GM12878 (cell line): ENCODE measurements at regions of chr19 and their contacts with region 1.

Region 1: GRCh38 chr19:42468273-42468796 is 25.6 kb upstream of the CXCL17 start:
- DNase-seq: no peak
- ATAC-seq: no peak
- H3K4me3 ChIP-seq: no peak overlapping the region
- H3K27ac ChIP-seq: no peak overlapping the region
- H3K4me1 ChIP-seq: peaks cover 30% of the 10 kb centered on the region
- H3K27me3 ChIP-seq: no peaks in the 10 kb centered on the region
- CTCF ChIP-seq: no peak
- EP300 ChIP-seq: no peak
- POLR2A ChIP-seq: no peak
- RAD21 ChIP-seq: no peak

Region 2: GRCh38 chr19:42261763-42262162 is 206.6 kb before region 1 on chr19:
- CTCF ChIA-PET with region 1: no interaction called
- POLR2A ChIA-PET with region 1: no interaction called
- RAD21 ChIA-PET with region 1: no interaction called
- SMC1A ChIA-PET with region 1: no interaction called
- in situ Hi-C with region 1: no loop called
- intact Hi-C with region 1: no loop called
- DNase-seq: no peak
- ATAC-seq: peak; percentile 46
- H3K4me3 ChIP-seq: no peak overlapping the region
- H3K27ac ChIP-seq: no peak overlapping the region
- H3K4me1 ChIP-seq: no peaks in the 10 kb centered on the region
- H3K27me3 ChIP-seq: no peaks in the 10 kb centered on the region
- CTCF ChIP-seq: no peak
- EP300 ChIP-seq: no peak
- POLR2A ChIP-seq: no peak
- RAD21 ChIP-seq: no peak

Region 3: GRCh38 chr19:42433503-42434260 is 34.7 kb before region 1 on chr19:
- CTCF ChIA-PET with region 1: interaction called, 13 read pairs
- POLR2A ChIA-PET with region 1: interaction called, 4 read pairs
- RAD21 ChIA-PET with region 1: interaction called, 5 read pairs
- SMC1A ChIA-PET with region 1: interaction called, 4 read pairs
- in situ Hi-C with region 1: no loop called
- intact Hi-C with region 1: no loop called
- DNase-seq: no peak
- ATAC-seq: peak; percentile 97
- H3K4me3 ChIP-seq: no peak overlapping the region
- H3K27ac ChIP-seq: no peak overlapping the region
- H3K4me1 ChIP-seq: no peaks in the 10 kb centered on the region
- H3K27me3 ChIP-seq: no peaks in the 10 kb centered on the region
- CTCF ChIP-seq: peak; percentile 91 to 95 (median 93)
- EP300 ChIP-seq: no peak
- POLR2A ChIP-seq: no peak
- RAD21 ChIP-seq: peak; percentile 83

Region 4: DNA sequence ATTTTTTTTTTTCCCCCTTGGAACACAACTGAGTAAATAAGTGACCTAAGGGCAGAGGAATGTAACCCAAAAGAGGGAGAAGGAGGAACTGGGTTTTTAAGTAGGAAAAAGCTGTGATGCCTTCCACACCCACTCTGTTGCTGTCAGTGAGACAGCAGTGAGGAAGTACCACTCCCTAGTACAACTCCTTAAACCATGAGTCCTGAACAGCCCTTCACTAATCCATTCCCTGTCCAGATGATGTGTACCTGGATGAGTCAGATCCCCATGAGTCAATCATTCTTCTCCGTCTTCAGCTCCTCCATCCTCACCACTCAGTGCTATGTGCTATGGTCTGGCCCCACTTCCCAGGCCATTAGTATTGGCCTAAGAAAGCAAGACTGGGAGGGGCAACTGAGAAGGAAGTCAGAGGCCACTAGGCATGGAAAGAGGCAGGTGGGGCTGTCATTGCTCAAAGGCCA is 12.7 kb before region 1 on chr19:
- CTCF ChIA-PET with region 1: interaction called, 47 read pairs
- POLR2A ChIA-PET with region 1: interaction called, 6 read pairs
- RAD21 ChIA-PET with region 1: interaction called, 50 read pairs
- SMC1A ChIA-PET with region 1: interaction called, 37 read pairs
- in situ Hi-C with region 1: no loop called
- intact Hi-C with region 1: no loop called
- DNase-seq: no peak
- ATAC-seq: no peak
- H3K4me3 ChIP-seq: no peak overlapping the region
- H3K27ac ChIP-seq: no peak overlapping the region
- H3K4me1 ChIP-seq: no peaks in the 10 kb centered on the region
- H3K27me3 ChIP-seq: no peaks in the 10 kb centered on the region
- CTCF ChIP-seq: no peak
- EP300 ChIP-seq: no peak
- POLR2A ChIP-seq: no peak
- RAD21 ChIP-seq: no peak

Region 5: DNA sequence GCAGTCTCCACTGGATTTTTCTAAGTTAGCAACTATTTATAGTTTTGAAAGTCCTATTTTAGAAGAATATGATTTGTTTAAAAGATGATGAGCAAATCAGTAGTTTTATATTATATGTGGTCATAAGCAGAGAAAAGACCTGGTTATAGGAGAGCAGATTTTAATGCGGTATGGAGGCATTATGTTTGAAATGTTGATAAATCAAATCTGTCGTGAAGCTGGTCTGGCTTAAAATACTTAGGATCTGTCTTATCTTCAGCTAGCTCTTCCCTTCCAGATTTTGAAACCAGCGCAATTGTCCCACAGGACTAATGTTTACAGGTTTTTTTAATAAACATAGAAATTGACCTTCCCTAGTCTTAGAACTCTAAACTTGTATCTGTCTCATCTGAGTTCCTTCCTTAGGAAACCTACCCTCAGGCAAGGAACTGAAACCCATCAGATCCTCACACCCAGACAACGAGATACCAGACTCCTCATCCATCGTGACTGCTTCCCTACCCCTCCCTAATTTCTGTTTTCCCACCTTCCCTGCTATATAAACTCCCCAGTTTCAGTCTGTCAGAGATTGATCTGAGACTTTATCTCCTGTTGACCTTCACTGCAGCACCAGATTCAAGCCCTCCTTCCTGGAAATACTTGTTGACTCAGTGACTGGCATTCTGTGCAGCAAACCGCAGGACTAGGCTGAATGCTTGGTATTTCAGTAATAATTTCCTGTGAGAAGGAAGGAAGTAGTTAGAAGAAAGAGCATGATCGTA is 12.2 kb after region 1 on chr19:
- CTCF ChIA-PET with region 1: interaction called, 8 read pairs
- POLR2A ChIA-PET with region 1: interaction called, 11 read pairs
- RAD21 ChIA-PET with region 1: no interaction called
- SMC1A ChIA-PET with region 1: interaction called, 12 read pairs
- in situ Hi-C with region 1: no loop called
- intact Hi-C with region 1: no loop called
- DNase-seq: no peak
- ATAC-seq: no peak
- H3K4me3 ChIP-seq: no peak overlapping the region
- H3K27ac ChIP-seq: no peak overlapping the region
- H3K4me1 ChIP-seq: no peaks in the 10 kb centered on the region
- H3K27me3 ChIP-seq: no peaks in the 10 kb centered on the region
- CTCF ChIP-seq: no peak
- EP300 ChIP-seq: no peak
- POLR2A ChIP-seq: no peak
- RAD21 ChIP-seq: no peak

Region 6: GRCh38 chr19:42497492-42498168 is 29.3 kb after region 1 on chr19:
- CTCF ChIA-PET with region 1: interaction called, 20 read pairs
- POLR2A ChIA-PET with region 1: interaction called, 8 read pairs
- RAD21 ChIA-PET with region 1: interaction called, 28 read pairs
- SMC1A ChIA-PET with region 1: interaction called, 30 read pairs
- in situ Hi-C with region 1: no loop called
- intact Hi-C with region 1: no loop called
- DNase-seq: peak; percentile 60
- ATAC-seq: peak; percentile 86
- H3K4me3 ChIP-seq: peak overlapping the region; percentile 9; the same call in 1 of the 2 replicates
- H3K27ac ChIP-seq: peak overlapping the region; percentile 80
- H3K4me1 ChIP-seq: peaks cover 28% of the 10 kb centered on the region
- H3K27me3 ChIP-seq: no peaks in the 10 kb centered on the region
- CTCF ChIP-seq: no peak
- EP300 ChIP-seq: peak; percentile 66 to 78; a peak in 3 of 4 replicates
- POLR2A ChIP-seq: no peak
- RAD21 ChIP-seq: 0 out of 2 replicates have a peak, but pooled peaks have one; percentile 8

Region 7: DNA sequence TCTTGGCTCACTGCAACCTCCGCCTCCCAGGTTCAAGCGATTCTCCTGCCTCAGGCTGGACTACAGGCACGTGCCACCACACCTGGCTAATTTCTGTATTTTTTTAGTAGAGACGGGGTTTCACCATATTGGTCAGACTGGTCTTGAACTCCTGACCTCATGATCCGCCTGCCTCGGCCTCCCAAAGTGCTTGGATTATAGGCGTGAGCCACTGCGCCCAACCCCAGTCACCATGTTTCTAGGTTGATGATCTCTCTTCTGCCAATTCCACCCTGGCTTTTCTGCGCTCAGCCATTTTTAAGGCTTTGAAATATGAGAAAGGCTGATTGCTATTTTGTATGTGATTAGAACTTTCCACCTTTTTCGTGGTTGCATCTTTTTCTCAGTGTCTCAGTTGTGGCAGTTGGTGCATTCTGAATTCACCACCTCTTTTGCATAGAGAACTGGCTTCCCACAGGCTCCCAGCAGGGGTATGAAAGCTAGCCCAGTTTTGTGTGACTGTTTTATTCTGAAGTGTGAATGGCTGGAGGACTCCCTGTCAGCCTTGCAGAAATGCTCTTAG is 44.5 kb after region 1 on chr19:
- CTCF ChIA-PET with region 1: interaction called, 15 read pairs
- POLR2A ChIA-PET with region 1: interaction called, 10 read pairs
- RAD21 ChIA-PET with region 1: interaction called, 23 read pairs
- SMC1A ChIA-PET with region 1: interaction called, 19 read pairs
- in situ Hi-C with region 1: no loop called
- intact Hi-C with region 1: loop called (anchors 5 kb)
- DNase-seq: peak; percentile 71
- ATAC-seq: peak; percentile 96
- H3K4me3 ChIP-seq: no peak overlapping the region
- H3K27ac ChIP-seq: peak overlapping the region; percentile 71
- H3K4me1 ChIP-seq: peaks cover 52% of the 10 kb centered on the region
- H3K27me3 ChIP-seq: no peaks in the 10 kb centered on the region
- CTCF ChIP-seq: 0 out of 6 replicates have a peak, but pooled peaks of 1 of the 3 experiments have one; percentile 11
- EP300 ChIP-seq: peak; percentile 26 to 68
- POLR2A ChIP-seq: no peak
- RAD21 ChIP-seq: no peak